Mucosa of descending colon (tissue), 3 donors: ENCODE measurements at regions of chr13 and their contacts with region 1.

Region 1: DNA sequence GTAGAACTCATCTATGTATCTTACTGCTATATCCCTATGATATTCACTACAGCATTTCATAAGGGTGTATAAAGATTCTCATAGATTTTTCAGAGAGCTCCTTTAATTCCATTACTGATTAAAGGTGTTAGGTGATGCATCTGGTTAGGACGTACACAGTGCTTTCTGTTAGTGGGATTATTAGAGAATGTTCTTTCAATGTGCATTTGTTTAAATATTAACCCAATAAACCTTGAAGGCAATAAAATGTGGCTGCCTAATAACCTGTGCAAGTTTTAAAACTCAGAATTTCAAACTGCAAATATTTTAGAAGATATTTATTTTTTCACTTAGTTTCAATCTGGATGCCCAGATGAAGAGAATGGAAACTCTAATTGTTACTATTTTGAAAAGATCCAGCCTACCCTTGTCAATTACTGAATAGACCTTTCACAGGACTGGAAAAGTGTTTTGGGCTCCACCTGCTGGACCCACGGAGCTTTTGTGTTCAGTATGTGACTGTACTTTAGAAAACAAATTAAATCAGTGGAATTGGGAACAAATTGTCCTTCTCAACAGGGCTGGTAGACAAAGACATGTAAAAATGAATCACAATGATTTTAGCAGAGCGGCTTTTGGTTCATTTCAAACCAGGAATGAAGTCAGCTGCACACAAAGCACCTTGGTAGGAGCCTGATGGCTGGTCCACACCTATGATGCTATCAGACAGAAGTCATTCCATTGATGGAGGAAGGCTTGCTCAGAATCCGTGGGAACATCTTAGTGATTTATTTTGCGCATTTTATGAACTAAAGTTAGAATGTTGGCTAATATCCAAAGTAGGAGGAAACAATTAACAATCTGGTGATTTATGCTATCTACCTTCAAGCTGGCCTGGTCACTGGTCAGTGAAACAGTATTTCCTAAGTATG is 89.4 kb upstream of the RAP2A start:
- DNase-seq: peak in 2 of 3 donors; percentile 61 to 79
- ATAC-seq: peak; percentile 69
- H3K4me3 ChIP-seq: no peak overlapping the region
- H3K4me1 ChIP-seq: peaks cover 12% of the 10 kb centered on the region
- CTCF ChIP-seq: no peak

Region 2: DNA sequence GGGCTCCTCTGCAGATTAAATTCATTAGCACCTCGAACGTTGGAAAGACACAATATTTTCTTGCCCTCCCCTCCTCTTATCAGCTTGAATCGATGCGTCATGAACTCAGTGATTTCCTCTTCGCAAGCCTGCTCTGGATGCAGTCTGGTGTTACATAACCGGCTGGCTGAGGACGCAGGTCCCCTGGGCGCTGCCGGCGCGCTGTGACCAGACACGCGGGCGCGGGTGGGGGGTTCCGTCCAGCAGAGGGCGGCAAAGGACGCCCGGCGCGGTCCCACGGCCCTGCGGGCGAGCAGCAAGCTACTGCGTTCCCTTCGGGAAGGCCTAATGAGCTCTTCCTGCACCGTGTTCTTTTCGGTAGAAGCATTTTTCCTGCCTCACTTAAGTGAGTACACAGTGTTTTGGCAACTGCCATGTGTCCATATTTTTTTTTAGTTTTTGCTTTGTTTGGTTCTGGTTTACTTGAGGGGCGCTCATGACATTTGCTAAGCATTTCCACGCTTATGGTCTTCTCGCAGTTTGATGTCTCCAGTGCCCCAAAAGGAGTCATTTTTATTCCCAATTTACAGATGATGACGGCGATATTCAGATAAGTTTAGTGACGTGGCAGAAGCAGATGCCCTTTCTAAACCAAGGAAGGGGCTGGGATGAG is 234.6 kb before region 1 on chr13:
- intact Hi-C with region 1: loop called in 1 of 2 experiments (anchors 5 kb)
- DNase-seq: peak; percentile 86 to 94 (median 91)
- ATAC-seq: peak; percentile 99
- H3K4me3 ChIP-seq: no peak overlapping the region
- H3K4me1 ChIP-seq: peaks cover 13% of the 10 kb centered on the region
- CTCF ChIP-seq: peak; percentile 89